ENCODE measurements at regions of chr1 and their contacts with region 1.

Region 1: GRCh38 chr1:193754732-193755427 is 568.5 kb upstream of the B3GALT2 start:
- DNase-seq: no peak
- H3K4me3 ChIP-seq: no peak overlapping the region
- H3K27ac ChIP-seq: no peak overlapping the region
- H3K4me1 ChIP-seq: no peaks in the 10 kb centered on the region
- H3K27me3 ChIP-seq: no peaks in the 10 kb centered on the region
- CTCF ChIP-seq: peak; percentile 28 to 44

Region 2: DNA sequence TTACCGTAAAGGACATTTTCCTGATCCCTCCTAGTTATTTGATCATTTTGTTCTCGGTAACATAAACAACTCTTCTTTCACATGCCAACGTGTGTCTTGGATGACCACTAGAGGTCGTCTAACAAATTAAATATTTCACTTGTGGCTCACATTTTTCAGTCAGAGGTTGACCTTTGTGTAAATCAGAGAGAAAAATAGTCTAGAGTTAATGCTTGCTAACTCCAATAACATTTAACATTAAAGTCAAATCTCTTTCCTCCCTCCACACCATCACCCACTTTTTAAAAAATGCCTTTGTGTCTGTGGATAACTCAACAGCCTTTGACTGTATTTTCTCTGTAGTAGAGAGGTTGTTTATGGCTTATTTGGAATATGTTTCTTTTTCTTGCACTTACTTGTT is 348.0 kb before region 1 on chr1:
- CTCF ChIA-PET with region 1: no interaction called
- dilution Hi-C with region 1: no loop called
- in situ Hi-C with region 1: no loop called
- intact Hi-C with region 1: loop called (anchors 5 kb)
- DNase-seq: peak; percentile 30
- H3K4me3 ChIP-seq: no peak overlapping the region
- H3K27ac ChIP-seq: no peak overlapping the region
- H3K4me1 ChIP-seq: no peaks in the 10 kb centered on the region
- H3K27me3 ChIP-seq: peaks cover 2% of the 10 kb centered on the region
- CTCF ChIP-seq: peak; percentile 70 to 74

Region 3: DNA sequence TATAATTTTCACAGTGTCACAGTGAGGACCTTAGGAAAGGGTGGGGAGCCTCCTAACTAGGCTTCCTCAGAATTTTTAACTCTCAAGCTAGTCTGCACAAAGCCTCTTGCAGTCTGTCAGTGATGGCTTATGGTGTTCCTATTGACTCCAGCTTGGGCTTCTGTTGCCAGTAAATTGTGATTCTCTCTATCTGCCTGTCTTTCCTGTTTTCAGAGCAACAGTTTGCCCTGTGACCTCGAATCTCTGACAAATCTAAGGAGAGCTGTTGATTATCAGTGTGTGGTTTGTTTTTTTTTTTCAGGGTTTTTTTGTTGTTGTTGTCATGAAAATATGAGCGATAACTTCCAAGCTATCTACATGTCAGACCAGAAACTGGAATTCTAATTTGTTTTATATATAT is 145.3 kb before region 1 on chr1:
- CTCF ChIA-PET with region 1: no interaction called
- dilution Hi-C with region 1: no loop called
- in situ Hi-C with region 1: no loop called
- intact Hi-C with region 1: loop called (anchors 10 kb)
- DNase-seq: no peak
- H3K4me3 ChIP-seq: no peak overlapping the region
- H3K27ac ChIP-seq: no peak overlapping the region
- H3K4me1 ChIP-seq: no peaks in the 10 kb centered on the region
- H3K27me3 ChIP-seq: no peaks in the 10 kb centered on the region
- CTCF ChIP-seq: no peak

Region 4: GRCh38 chr1:193629875-193630274 is 125.0 kb before region 1 on chr1:
- CTCF ChIA-PET with region 1: no interaction called
- dilution Hi-C with region 1: no loop called
- in situ Hi-C with region 1: no loop called
- intact Hi-C with region 1: no loop called
- DNase-seq: no peak
- H3K4me3 ChIP-seq: no peak overlapping the region
- H3K27ac ChIP-seq: no peak overlapping the region
- H3K4me1 ChIP-seq: no peaks in the 10 kb centered on the region
- H3K27me3 ChIP-seq: no peaks in the 10 kb centered on the region
- CTCF ChIP-seq: no peak

Region 5: GRCh38 chr1:193712392-193712791 is 42.5 kb before region 1 on chr1:
- CTCF ChIA-PET with region 1: no interaction called
- dilution Hi-C with region 1: no loop called
- in situ Hi-C with region 1: no loop called
- intact Hi-C with region 1: no loop called
- DNase-seq: no peak
- H3K4me3 ChIP-seq: no peak overlapping the region
- H3K27ac ChIP-seq: no peak overlapping the region
- H3K4me1 ChIP-seq: peaks cover 8% of the 10 kb centered on the region
- H3K27me3 ChIP-seq: no peaks in the 10 kb centered on the region
- CTCF ChIP-seq: no peak